Ascending aorta (tissue), 2 donors: ENCODE measurements at regions of chr11 and their contacts with region 1.

Region 1: GRCh38 chr11:57426929-57427726 is at the start of gene SLC43A3:
- DNase-seq: peak; percentile 43 to 89
- H3K4me3 ChIP-seq: peak within 1 kb of the TSS; percentile 49 to 80
- H3K27ac ChIP-seq: peak within 1 kb of the TSS; percentile 97 to 98
- H3K4me1 ChIP-seq: peaks cover 23 to 43% of the 10 kb centered on the region in 2 donors
- H3K27me3 ChIP-seq: no peaks in the 10 kb centered on the region
- CTCF ChIP-seq: no peak
- total RNA-seq, gene SLC43A3: 211 TPM

Region 2: DNA sequence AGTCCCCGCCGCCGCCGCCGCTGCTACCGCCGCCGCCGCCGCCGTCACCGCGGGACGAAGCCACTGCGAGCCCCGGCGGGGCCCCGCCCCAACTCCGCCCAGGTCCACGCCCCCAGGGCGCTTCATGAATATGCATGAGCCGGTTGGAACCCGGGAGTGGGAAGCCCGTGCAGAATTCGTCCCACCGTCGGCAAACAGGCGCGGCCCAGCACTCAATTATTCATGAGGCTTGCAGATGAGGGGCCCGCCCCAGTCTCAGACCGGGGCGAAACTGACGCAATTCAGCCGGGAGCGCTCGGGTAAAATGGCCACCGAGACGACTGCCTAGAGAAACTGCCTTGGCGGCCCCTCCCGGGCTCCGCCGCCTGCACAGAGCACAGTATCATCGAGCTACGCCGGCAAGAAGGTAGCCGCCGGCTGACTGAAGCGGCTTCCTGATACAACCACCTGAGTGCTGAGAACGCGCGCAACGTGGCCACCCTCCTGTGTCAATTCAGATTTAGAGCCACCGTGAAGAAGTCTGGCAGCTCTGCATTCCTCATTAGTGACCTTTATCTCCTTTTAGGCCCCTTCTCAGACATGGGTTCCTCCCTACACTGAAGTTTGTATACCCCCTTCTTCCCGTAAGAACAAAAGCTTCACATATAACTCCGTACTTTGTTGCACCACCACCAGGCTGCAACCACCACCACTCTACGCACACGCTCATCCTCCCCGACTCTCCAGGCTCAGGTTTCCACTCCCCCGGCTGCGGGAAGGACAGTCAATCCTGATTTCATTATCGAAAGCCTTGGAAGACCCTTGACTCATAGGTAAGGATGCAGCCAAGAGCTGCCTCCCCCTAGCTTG is 102.0 kb before region 1 on chr11 and contains the start of gene TNKS1BP1:
- intact Hi-C with region 1: loop called (anchors 2 kb)
- DNase-seq: peak; percentile 97 to 99
- H3K4me3 ChIP-seq: peak within 1 kb of the TSS; percentile 90 to 94
- H3K27ac ChIP-seq: peak within 1 kb of the TSS; percentile 94 to 98
- H3K4me1 ChIP-seq: peaks cover 8 to 28% of the 10 kb centered on the region in 2 donors
- H3K27me3 ChIP-seq: no peaks in the 10 kb centered on the region
- CTCF ChIP-seq: no peak
- total RNA-seq, gene TNKS1BP1: 131 TPM

Region 3: GRCh38 chr11:57358543-57358961 is 68.6 kb before region 1 on chr11:
- intact Hi-C with region 1: no loop called
- DNase-seq: no peak
- H3K4me3 ChIP-seq: no peak overlapping the region
- H3K27ac ChIP-seq: no peak overlapping the region
- H3K4me1 ChIP-seq: no peaks in the 10 kb centered on the region
- H3K27me3 ChIP-seq: no peaks in the 10 kb centered on the region
- CTCF ChIP-seq: no peak

Region 4: DNA sequence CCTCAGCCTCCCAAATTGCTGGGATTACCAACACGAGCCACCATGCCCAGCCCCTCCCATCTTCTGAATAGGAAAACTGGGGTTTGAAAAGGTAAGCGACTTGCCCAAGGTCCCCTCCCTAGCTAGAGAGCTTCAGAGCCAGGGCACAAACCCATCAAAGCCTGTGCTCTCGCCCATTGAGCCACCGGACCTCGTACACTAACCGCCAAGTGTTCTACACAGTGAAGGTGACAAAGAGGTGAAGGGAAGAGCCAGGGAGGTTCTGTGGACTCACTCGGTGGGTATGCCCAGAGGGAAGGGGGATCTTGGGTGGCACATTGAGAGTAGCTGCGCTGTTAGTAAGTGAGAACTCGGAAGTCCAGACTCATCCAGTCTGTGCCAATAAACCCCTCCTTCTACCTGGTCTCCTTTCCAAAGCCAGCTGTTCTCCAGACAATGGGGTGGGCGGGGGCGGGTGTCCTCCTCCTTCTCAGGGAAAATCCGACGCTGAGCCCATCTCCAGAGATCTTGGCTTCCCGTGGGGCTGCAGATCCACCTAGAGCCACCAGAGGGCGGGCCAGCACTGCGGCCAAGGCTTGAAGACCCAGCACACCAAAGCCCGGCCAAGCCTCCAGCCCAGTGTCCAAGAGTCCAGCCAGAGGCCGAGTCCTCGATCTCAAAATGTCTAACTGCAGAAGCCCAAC is 30.0 kb after region 1 on chr11:
- intact Hi-C with region 1: loop called (anchors 2 kb)
- DNase-seq: peak; percentile 50 to 95
- H3K4me3 ChIP-seq: peak overlapping the region; percentile 53 to 55
- H3K27ac ChIP-seq: no peak overlapping the region
- H3K4me1 ChIP-seq: peaks cover 16 to 32% of the 10 kb centered on the region in 2 donors
- H3K27me3 ChIP-seq: peaks cover 28% of the 10 kb centered on the region
- CTCF ChIP-seq: peak; percentile 91 to 100 (median 100)

Region 5: GRCh38 chr11:57480409-57481137 is 53.4 kb after region 1 on chr11:
- intact Hi-C with region 1: no loop called
- DNase-seq: peak in 1 of 2 donors; percentile 76
- H3K4me3 ChIP-seq: no peak overlapping the region
- H3K27ac ChIP-seq: no peak overlapping the region
- H3K4me1 ChIP-seq: peaks cover 4 to 16% of the 10 kb centered on the region in 2 donors
- H3K27me3 ChIP-seq: peaks cover 6% of the 10 kb centered on the region
- CTCF ChIP-seq: peak; percentile 48 to 78 (median 75)

Region 6: GRCh38 chr11:57597916-57598830 is 171.0 kb after region 1 on chr11:
- intact Hi-C with region 1: loop called (anchors 5 kb)
- DNase-seq: peak; percentile 42 to 89
- H3K4me3 ChIP-seq: peak overlapping the region; percentile 72
- H3K27ac ChIP-seq: peak overlapping the region; percentile 95 to 97
- H3K4me1 ChIP-seq: peaks cover 0 to 9% of the 10 kb centered on the region in 2 donors
- H3K27me3 ChIP-seq: no peaks in the 10 kb centered on the region
- CTCF ChIP-seq: no peak

Region 7: GRCh38 chr11:58097437-58097836 is 670.3 kb after region 1 on chr11:
- intact Hi-C with region 1: no loop called
- DNase-seq: no peak
- H3K4me3 ChIP-seq: no peak overlapping the region
- H3K27ac ChIP-seq: no peak overlapping the region
- H3K4me1 ChIP-seq: no peaks in the 10 kb centered on the region
- H3K27me3 ChIP-seq: no peaks in the 10 kb centered on the region
- CTCF ChIP-seq: no peak

Region 8: DNA sequence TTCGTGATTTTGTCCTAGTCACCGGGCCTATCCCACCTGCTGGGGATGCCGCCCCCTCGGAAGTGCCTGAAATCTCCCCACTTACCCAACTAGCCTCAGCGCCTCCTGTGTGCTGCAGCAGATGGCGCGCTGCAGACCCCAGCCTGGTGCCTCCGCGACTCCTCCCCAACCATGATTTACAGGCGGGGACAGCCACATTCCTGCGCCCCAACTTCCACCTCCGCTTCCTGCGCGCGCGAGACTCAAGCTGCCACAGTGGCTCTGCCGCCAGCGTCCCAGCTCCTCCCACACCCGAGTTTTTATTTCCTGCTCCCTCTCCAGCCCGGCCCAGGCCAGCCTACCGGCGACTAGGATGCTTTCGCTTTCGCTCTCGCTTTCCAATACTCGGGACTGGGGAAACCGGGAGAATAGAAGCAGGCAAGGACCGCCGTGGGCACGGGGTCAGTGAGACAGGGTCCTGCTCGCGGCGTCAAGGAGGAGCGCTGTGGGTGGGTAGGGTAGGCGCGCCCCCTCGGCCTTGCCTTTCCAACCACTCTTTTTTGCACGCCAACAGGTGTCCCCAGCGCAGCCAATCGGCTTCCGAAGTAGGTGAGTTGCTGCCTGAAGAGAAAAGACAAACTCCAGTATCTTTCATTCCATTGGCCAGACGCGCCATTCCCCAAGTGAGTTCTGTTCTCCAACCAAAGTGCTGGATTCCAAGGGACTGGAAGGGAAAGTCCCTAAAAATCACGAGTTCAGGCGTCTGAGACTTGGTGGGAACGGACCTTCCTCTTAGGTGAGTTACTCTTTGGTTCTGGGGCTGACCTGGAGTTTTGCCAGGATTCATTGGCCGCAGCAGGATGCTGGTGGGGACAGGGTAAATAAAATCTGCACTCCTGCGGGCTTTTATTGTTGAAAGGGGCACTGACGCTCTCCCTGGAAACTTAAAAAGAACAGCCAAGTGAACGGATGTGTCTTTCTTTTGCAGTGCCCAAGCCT is 1715.7 kb after region 1 on chr11 and contains the start of gene FAM111A:
- intact Hi-C with region 1: loop called (anchors 5 kb)
- DNase-seq: peak; percentile 70 to 93
- H3K4me3 ChIP-seq: peak within 1 kb of the TSS; percentile 79 to 90
- H3K27ac ChIP-seq: peak within 1 kb of the TSS; percentile 95 to 96
- H3K4me1 ChIP-seq: peaks cover 0 to 9% of the 10 kb centered on the region in 2 donors
- H3K27me3 ChIP-seq: no peaks in the 10 kb centered on the region
- CTCF ChIP-seq: peak in 1 of 3 experiments; percentile 18
- total RNA-seq, gene FAM111A: 54.3 TPM